Activated CD4-positive, alpha-beta memory T cell treated with anti-CD3 and anti-CD28 coated beads for 36 hours (primary cell): ENCODE measurements at regions of chr3 and their contacts with region 1.

Region 1: GRCh38 chr3:9932843-9933560 is 632 bp upstream of the CRELD1 start:
- DNase-seq: peak; percentile 94
- H3K4me3 Mint-ChIP-seq: peak overlapping the region; percentile 86
- H3K27ac Mint-ChIP-seq: peak overlapping the region; percentile 89
- H3K4me1 Mint-ChIP-seq: peaks cover 28% of the 10 kb centered on the region
- H3K27me3 Mint-ChIP-seq: no peaks in the 10 kb centered on the region

Region 2: GRCh38 chr3:9373465-9373864 is 559.5 kb before region 1 on chr3:
- CTCF ChIA-PET with region 1: no interaction called
- POLR2A ChIA-PET with region 1: no interaction called
- intact Hi-C with region 1: no loop called
- DNase-seq: no peak
- H3K4me3 Mint-ChIP-seq: no peak overlapping the region
- H3K27ac Mint-ChIP-seq: no peak overlapping the region
- H3K4me1 Mint-ChIP-seq: peaks cover 24% of the 10 kb centered on the region
- H3K27me3 Mint-ChIP-seq: no peaks in the 10 kb centered on the region

Region 3: DNA sequence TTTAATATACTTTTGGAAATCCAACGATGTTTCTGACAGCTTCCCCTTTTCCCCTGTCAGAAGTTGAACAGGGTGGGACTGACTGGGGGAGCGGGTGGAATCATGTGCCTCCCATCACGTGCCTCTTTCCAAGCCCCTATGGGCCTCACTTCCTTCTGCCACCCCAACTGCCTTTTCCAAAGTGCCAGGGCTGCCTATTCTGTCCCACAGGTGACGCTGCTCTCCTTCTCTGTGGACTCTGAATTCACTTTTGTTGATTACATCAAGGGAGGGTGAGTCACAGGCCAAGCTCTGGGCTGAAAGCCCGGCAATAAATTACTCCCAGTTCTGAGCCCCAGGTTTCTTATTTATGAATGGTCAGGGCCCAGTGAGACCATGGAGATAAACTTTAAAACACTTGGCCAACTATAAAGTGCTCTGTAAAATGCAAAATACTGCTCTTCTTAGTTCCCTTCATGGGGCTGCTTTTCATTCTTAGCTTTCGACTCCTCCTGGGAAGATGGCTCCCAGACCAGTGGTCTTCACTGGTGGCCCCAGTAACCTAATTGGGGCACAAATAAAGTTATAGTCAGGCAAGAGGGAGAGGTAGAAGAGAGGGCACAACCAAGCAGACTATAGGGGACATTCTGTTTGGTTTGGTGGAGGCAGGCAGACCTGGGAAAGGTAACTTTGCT is 217.1 kb before region 1 on chr3:
- CTCF ChIA-PET with region 1: interaction called, 3 read pairs
- POLR2A ChIA-PET with region 1: no interaction called
- intact Hi-C with region 1: loop called (anchors 5 kb)
- DNase-seq: peak; percentile 71
- H3K4me3 Mint-ChIP-seq: no peak overlapping the region
- H3K27ac Mint-ChIP-seq: no peak overlapping the region
- H3K4me1 Mint-ChIP-seq: peaks cover 4% of the 10 kb centered on the region
- H3K27me3 Mint-ChIP-seq: no peaks in the 10 kb centered on the region

Region 4: GRCh38 chr3:9843715-9844438 is 89.1 kb before region 1 on chr3 and contains the start of gene RPUSD3:
- CTCF ChIA-PET with region 1: interaction called, 22 read pairs
- POLR2A ChIA-PET with region 1: interaction called, 13 read pairs
- intact Hi-C with region 1: loop called (anchors 1 kb)
- DNase-seq: peak; percentile 97
- H3K4me3 Mint-ChIP-seq: peak within 1 kb of the TSS; percentile 99
- H3K27ac Mint-ChIP-seq: peak within 1 kb of the TSS; percentile 90
- H3K4me1 Mint-ChIP-seq: peaks cover 26% of the 10 kb centered on the region
- H3K27me3 Mint-ChIP-seq: no peaks in the 10 kb centered on the region
- total RNA-seq, gene RPUSD3: 79.0 to 80.8 TPM

Region 5: GRCh38 chr3:9946112-9947024 is 13.4 kb after region 1 on chr3:
- CTCF ChIA-PET with region 1: interaction called, 73 read pairs
- POLR2A ChIA-PET with region 1: interaction called, 33 read pairs
- intact Hi-C with region 1: loop called (anchors 1 kb)
- DNase-seq: peak; percentile 87
- H3K4me3 Mint-ChIP-seq: peak overlapping the region; percentile 78
- H3K27ac Mint-ChIP-seq: peak overlapping the region; percentile 74
- H3K4me1 Mint-ChIP-seq: peaks cover 14% of the 10 kb centered on the region
- H3K27me3 Mint-ChIP-seq: no peaks in the 10 kb centered on the region

Region 6: GRCh38 chr3:9986237-9986725 is 53.3 kb after region 1 on chr3:
- CTCF ChIA-PET with region 1: interaction called, 21 read pairs
- POLR2A ChIA-PET with region 1: interaction called, 7 read pairs
- intact Hi-C with region 1: loop called (anchors 1 kb)
- DNase-seq: no peak
- H3K4me3 Mint-ChIP-seq: peak overlapping the region; percentile 89
- H3K27ac Mint-ChIP-seq: peak overlapping the region; percentile 98
- H3K4me1 Mint-ChIP-seq: peaks cover 31% of the 10 kb centered on the region
- H3K27me3 Mint-ChIP-seq: no peaks in the 10 kb centered on the region

Region 7: DNA sequence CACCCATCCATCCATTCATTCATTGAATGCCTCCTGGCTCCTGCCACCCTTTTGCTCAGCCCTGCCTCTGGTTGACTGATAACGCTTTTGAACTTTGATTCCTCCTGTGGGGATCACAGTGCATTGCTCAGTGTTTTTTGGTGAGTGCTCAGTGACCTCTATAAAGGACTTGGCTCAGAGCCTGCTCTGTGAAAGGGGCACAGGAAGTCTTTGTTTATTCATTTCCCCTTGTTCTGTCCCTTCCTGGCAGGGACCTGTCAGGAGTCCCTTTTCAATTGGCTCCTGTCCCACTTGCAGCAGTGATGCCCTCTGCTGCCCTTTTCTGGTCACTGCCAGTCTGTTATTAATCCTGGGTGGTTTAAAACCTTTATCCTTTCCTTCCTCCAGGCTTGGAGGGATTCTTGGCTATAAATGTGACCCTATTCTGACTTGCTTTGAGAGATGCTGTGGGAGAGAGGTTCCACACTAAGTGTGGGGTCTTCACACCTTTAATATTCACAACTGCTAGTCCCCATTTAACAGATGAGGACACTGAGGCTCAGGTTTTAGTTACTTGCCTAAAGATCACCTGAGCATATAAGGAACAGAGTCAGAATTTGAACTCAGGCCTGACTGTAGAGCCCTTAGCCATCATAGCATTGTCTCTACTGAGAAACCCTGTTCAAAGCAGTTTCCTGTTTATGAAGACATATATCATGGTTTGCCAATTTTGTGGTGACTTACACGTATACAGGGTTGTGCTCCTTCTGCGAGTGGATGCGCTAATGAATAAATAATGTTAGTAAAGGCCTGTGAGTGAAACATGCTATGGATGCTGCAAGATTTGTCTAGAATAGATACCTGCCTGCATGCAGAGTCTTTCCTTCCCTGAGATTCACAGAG is 292.0 kb after region 1 on chr3:
- CTCF ChIA-PET with region 1: interaction called, 3 read pairs
- POLR2A ChIA-PET with region 1: interaction called, 3 read pairs
- intact Hi-C with region 1: loop called (anchors 2 kb)
- DNase-seq: peak; percentile 84
- H3K4me3 Mint-ChIP-seq: peak overlapping the region; percentile 46
- H3K27ac Mint-ChIP-seq: peak overlapping the region; percentile 92
- H3K4me1 Mint-ChIP-seq: peaks cover 75% of the 10 kb centered on the region
- H3K27me3 Mint-ChIP-seq: no peaks in the 10 kb centered on the region